SK-N-SH (cell line): ENCODE measurements at regions of chr15 and their contacts with region 1.

Region 1: GRCh38 chr15:48975472-48976419 is 12.0 kb upstream of the SHC4 start:
- DNase-seq: peak; percentile 93
- H3K4me3 ChIP-seq: peak overlapping the region; percentile 57 to 62
- H3K27ac ChIP-seq: peak overlapping the region; percentile 51 to 89
- H3K4me1 ChIP-seq: peaks cover 1 to 15% of the 10 kb centered on the region in 2 experiments; a peak in 2 of 4 replicates
- H3K27me3 ChIP-seq: no peaks in the 10 kb centered on the region
- CTCF ChIP-seq: peak; percentile 85
- EP300 ChIP-seq: no peak
- RAD21 ChIP-seq: peak; percentile 58

Region 2: GRCh38 chr15:48469271-48469670 is 506.5 kb before region 1 on chr15:
- CTCF ChIA-PET with region 1: no interaction called
- POLR2A ChIA-PET with region 1: no interaction called
- DNase-seq: no peak
- H3K4me3 ChIP-seq: no peak overlapping the region
- H3K27ac ChIP-seq: no peak overlapping the region
- H3K4me1 ChIP-seq: no peaks in the 10 kb centered on the region; a peak in 2 of 4 replicates
- H3K27me3 ChIP-seq: no peaks in the 10 kb centered on the region
- CTCF ChIP-seq: no peak
- EP300 ChIP-seq: no peak
- RAD21 ChIP-seq: no peak

Region 3: DNA sequence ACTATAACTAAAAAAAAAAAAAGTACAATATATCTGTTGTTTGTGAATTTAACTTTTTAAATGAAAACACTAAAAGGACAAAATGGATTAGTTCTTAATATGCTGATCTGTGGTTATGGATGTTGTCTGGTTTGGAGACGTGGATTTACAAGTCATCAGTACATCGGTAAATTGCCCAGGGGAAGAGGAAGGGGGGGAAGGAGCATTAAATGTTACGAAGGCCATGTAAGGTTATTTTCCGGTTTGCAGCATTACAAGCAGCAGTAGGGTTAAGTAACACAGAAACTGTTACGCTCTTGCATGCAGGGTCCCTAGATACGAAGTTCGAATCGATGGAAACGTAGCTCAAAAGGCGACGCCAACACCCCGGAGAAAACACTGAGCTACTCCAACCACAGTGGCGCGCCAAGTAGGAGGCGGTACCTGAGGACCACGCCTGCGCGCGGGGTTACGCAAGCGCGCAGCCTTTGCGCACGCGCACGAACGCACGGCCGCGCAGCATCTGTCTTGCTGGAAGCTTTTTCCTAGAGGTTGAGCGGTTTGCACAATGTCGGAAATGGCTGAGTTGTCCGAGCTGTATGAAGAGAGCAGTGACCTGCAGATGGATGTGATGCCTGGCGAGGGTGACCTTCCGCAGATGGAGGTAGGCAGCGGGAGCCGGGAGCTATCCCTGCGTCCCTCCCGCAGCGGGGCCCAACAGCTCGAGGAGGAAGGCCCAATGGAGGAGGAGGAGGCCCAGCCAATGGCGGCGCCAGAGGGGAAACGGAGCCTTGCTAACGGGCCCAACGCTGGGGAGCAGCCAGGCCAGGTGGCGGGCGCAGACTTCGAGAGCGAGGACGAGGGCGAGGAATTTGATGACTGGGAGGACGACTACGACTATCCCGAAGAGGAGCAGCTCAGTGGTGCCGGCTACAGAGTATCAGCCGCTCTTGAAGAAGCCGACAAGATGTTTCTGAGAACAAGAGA is 97.8 kb before region 1 on chr15 and contains the start of gene EID1:
- CTCF ChIA-PET with region 1: interaction called, 11 read pairs
- POLR2A ChIA-PET with region 1: interaction called, 10 read pairs
- DNase-seq: peak; percentile 90
- H3K4me3 ChIP-seq: peak within 1 kb of the TSS; percentile 82 to 98
- H3K27ac ChIP-seq: peak within 1 kb of the TSS; percentile 82 to 98
- H3K4me1 ChIP-seq: peaks cover 0 to 12% of the 10 kb centered on the region in 2 experiments; a peak in 2 of 4 replicates
- H3K27me3 ChIP-seq: no peaks in the 10 kb centered on the region
- CTCF ChIP-seq: peak; percentile 16; the same call in 1 of the 2 replicates
- EP300 ChIP-seq: no peak
- RAD21 ChIP-seq: peak; percentile 2; the same call in 1 of the 2 replicates
- polyA plus RNA-seq, gene EID1: 170 and 228 TPM in 2 replicates

Region 4: DNA sequence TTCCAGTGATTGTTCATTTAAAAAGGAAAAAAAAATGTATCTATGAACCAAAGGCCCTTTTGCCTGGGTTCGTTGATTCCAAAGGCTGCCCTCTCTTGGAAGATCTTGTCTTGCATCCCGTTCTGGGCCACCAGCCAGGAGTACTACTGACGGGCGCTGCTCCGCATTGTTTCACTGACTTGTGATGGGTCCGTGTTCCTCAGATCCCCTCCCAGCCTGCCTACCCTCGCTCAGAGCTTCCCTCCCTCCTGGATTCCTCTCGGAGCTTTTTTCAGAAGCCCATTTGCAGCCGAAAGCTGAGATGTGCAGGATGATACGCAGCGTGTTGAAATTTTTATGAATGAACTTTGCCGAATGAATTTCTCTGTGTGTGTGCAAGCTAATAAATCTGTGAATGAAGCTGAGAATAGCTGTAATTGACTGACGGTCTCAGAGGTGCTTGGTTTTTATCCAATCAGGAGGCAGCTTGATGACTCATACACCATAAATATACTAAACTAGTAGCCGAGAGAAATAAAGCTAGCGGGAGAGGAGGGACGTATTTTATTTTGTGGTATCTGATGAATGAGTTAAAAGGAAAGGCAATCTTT is 12.1 kb before region 1 on chr15 and contains the start of gene SHC4:
- CTCF ChIA-PET with region 1: interaction called, 60 read pairs
- POLR2A ChIA-PET with region 1: interaction called, 23 read pairs
- DNase-seq: peak; percentile 84
- H3K4me3 ChIP-seq: peak within 1 kb of the TSS; percentile 76 to 78
- H3K27ac ChIP-seq: peak within 1 kb of the TSS; percentile 79 to 84
- H3K4me1 ChIP-seq: peaks cover 10 to 12% of the 10 kb centered on the region in 2 experiments; a peak in 2 of 4 replicates
- H3K27me3 ChIP-seq: no peaks in the 10 kb centered on the region
- CTCF ChIP-seq: peak; percentile 58
- EP300 ChIP-seq: no peak; a peak in 1 of 4 replicates
- RAD21 ChIP-seq: peak; percentile 27; the same call in 1 of the 2 replicates
- polyA plus RNA-seq, gene SHC4: 1.6 and 1.9 TPM in 2 replicates

Region 5: DNA sequence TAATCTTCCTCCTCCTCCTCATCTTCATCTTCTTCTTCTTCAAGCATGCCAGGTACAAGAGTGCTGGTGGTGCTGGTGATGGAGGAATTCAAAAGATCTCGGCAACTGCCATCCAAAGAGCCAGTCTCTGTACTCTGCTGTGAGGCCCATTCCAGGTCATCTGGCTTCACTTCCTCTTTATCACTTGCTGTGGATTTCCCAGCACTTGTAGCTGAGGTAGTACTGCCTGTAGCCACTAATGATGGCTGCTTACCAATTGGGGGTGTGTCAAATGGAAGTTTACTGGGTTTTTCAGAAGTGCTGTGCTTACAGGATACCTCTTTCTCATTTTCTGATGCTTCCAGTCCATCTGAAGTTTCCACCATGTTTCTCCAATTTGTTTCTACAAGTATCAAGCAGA is 16.8 kb after region 1 on chr15:
- CTCF ChIA-PET with region 1: interaction called, 22 read pairs
- POLR2A ChIA-PET with region 1: interaction called, 4 read pairs
- DNase-seq: no peak
- H3K4me3 ChIP-seq: no peak overlapping the region
- H3K27ac ChIP-seq: no peak overlapping the region
- H3K4me1 ChIP-seq: peaks cover 6 to 14% of the 10 kb centered on the region in 2 experiments; a peak in 2 of 4 replicates
- H3K27me3 ChIP-seq: no peaks in the 10 kb centered on the region
- CTCF ChIP-seq: no peak
- EP300 ChIP-seq: no peak
- RAD21 ChIP-seq: no peak

Region 6: GRCh38 chr15:49145651-49146609 is 170.2 kb after region 1 on chr15:
- CTCF ChIA-PET with region 1: interaction called, 22 read pairs
- POLR2A ChIA-PET with region 1: no interaction called
- DNase-seq: peak; percentile 33
- H3K4me3 ChIP-seq: no peak overlapping the region; a peak in 1 of 4 replicates
- H3K27ac ChIP-seq: peak overlapping the region in 1 of 2 experiments; percentile 39; a peak in 1 of 4 replicates
- H3K4me1 ChIP-seq: peaks cover 6 to 7% of the 10 kb centered on the region in 2 experiments; a peak in 2 of 4 replicates
- H3K27me3 ChIP-seq: no peaks in the 10 kb centered on the region
- CTCF ChIP-seq: peak; percentile 92
- EP300 ChIP-seq: no peak
- RAD21 ChIP-seq: peak; percentile 77